ENCODE measurements at regions of chr10 and their contacts with region 1.

Region 1: DNA sequence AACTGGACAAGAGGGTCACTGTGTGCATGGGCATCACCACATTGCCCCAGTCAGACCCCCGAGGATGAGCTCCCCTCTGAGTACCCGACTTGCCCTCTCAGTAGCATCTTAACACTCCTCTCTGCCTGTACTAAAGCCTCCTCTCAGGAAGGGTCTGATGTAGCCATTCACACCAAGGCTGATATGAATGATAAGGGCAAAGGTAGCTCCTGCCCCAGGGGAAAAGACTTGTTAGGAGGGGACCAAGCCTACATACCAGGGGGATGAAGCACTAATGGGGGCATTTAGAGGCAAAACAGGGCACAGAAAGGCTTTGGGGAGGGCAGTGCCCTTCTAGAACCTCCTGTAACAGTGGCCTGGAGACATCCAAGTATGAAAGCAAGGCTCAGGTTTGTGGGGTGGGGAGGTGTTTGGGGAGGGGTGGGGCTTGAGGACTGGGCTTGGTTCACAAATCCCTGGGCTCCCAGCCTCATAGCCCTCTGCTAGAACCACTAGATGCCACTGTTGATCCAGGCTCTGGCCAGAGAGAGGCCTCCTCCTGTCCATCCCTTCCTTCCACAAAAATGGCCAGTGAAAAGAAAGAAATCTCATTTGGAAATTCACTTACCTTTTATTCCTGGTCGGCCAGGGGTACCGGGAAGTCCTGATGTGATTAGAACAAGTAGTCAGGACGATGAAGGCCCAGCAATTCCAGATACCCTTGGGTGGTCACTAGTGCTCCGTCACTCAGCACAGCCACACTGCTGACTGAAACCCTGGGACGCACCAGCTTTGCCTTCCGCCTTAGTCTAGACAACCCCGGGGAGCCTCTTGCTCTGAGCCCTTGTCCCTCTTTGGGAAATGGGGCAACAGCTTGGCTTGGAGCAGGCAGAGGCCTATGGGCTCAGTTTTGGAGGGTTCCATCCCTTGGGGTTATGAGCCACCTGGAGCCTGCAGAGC is 40.3 kb downstream of the COL17A1 start:
- ATAC-seq: peak; percentile 54 to 100 (median 76)
- H3K4me3 ChIP-seq: no peak overlapping the region
- H3K27ac ChIP-seq: no peak overlapping the region
- H3K4me1 ChIP-seq: no peaks in the 10 kb centered on the region

Region 2: DNA sequence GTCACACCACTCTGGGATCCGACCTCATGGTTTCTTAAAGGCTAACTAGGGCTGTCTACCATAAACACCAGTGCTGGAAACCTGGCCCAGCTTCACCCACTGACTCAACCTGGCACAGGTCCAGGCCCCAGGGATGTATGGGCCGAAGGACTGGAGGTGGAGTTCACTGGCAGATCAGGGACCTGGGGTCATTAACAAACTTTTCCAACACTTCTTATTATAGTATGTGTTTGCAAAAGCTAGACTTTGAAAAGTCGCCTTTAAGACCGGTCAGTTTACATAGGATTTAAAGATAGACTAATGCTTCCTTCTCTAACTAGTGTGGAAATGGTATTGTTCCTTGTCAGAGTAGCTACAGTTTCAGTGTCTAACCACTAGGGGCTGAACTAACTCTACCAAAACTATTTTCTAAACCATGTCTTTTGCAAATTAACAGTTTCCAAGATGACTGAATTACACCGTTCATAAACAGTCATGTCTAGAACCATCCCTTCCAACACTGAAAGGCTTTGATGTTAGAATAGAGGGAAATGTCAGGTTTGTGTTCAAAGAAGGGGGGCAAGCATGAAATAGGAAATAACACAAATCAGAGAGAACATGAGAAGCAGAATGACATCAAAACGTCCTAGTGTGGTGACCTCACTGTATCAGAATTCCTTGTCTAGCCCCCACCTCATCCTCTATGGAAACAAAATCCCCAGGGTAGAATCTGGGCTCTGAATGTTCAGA is 157.1 kb before region 1 on chr10:
- in situ Hi-C with region 1: loop called in 1 of 9 experiments (anchors 25 kb)
- ATAC-seq: peak; percentile 38 to 82 (median 64)
- H3K4me3 ChIP-seq: no peak overlapping the region
- H3K27ac ChIP-seq: no peak overlapping the region
- H3K4me1 ChIP-seq: peaks cover 4% of the 10 kb centered on the region in 2 donors

Region 3: GRCh38 chr10:104121520-104122224 is 76.3 kb after region 1 on chr10 and contains the start of gene SFR1:
- in situ Hi-C with region 1: loop called in 1 of 9 experiments (anchors 10 kb)
- ATAC-seq: peak; percentile 61 to 96 (median 94)
- H3K4me3 ChIP-seq: peak within 1 kb of the TSS; percentile 42 to 72 (median 67)
- H3K27ac ChIP-seq: peak within 1 kb of the TSS; percentile 78 to 85
- H3K4me1 ChIP-seq: peaks cover 8 to 16% of the 10 kb centered on the region in 2 donors
- total RNA-seq, gene SFR1: 7.4 to 45.4 (median 9.5) TPM

Region 4: GRCh38 chr10:104209575-104210198 is 164.3 kb after region 1 on chr10:
- in situ Hi-C with region 1: loop called in 3 of 9 experiments (anchors 5 to 25 kb)
- ATAC-seq: peak in 5 of 8 experiments; percentile 50 to 72 (median 62)
- H3K4me3 ChIP-seq: no peak overlapping the region
- H3K27ac ChIP-seq: no peak overlapping the region
- H3K4me1 ChIP-seq: no peaks in the 10 kb centered on the region

Region 5: GRCh38 chr10:104254493-104255310 is 209.3 kb after region 1 on chr10 and contains the start of gene GSTO1:
- in situ Hi-C with region 1: no loop called
- ATAC-seq: peak; percentile 67 to 84 (median 82)
- H3K4me3 ChIP-seq: peak within 1 kb of the TSS; percentile 41 to 76 (median 62)
- H3K27ac ChIP-seq: peak within 1 kb of the TSS; percentile 2 to 73
- H3K4me1 ChIP-seq: peaks cover 11 to 17% of the 10 kb centered on the region in 2 donors
- total RNA-seq, gene GSTO1: 29.7 to 331 (median 51.5) TPM

Measured in motor neuron (in vitro differentiated cells).